SK-N-SH (cell line): ENCODE measurements at regions of chr1 and their contacts with region 1.

Region 1: DNA sequence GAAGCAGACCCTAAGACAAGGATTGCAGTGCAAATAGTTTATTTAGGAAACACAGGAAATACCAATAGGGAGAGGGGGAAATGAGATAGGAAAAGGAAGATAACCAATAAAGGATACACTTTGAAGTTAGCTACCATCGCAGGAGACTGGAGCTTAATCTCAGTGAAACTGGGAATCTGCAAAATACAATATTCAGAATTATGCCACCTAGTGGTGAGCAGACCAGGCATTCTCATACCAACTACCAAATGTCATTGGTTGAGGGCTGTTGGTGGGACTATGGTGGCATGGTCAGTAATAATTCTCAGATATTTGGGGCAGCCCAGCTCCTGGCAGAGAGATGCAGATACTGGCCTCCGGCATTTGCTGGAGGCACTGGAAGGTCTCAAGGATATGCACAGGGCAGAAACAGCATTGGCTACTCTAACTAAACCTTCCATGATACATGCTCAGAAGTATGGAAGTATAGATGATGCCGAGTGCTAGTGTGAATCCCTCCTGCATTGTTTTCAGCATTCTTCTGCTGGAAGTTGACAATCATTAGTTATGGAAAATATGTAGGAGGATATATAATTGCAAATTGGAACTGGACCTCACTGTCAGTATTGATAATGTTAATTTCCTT is 11.8 kb upstream of the ZFP69B start:
- DNase-seq: peak; percentile 75
- H3K4me3 ChIP-seq: no peak overlapping the region
- H3K27ac ChIP-seq: no peak overlapping the region
- H3K4me1 ChIP-seq: no peaks in the 10 kb centered on the region
- H3K27me3 ChIP-seq: no peaks in the 10 kb centered on the region
- CTCF ChIP-seq: peak; percentile 67
- EP300 ChIP-seq: no peak
- RAD21 ChIP-seq: peak; percentile 52

Region 2: DNA sequence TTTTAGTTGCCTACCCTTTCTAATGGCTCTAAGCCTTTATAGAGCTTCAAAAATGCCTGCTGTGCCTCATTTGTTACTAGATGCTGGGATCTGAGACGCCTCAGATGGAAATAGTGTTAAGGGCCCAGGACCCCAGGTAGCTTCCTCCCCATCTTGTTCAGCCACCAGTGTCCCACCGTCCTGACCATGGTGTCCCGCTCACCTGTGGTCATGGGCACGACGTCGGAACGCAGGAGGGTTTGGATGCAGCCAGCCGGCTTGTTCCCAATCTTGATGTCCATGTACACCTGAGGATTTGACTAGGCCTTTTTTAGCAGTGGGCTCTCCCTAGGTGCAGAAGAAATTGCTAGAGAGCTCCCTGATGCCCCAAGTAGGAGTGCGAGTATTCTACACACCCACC is 893.0 kb before region 1 on chr1:
- CTCF ChIA-PET with region 1: no interaction called
- POLR2A ChIA-PET with region 1: no interaction called
- DNase-seq: no peak
- H3K4me3 ChIP-seq: no peak overlapping the region
- H3K27ac ChIP-seq: no peak overlapping the region
- H3K4me1 ChIP-seq: no peaks in the 10 kb centered on the region
- H3K27me3 ChIP-seq: no peaks in the 10 kb centered on the region
- CTCF ChIP-seq: no peak
- EP300 ChIP-seq: no peak
- RAD21 ChIP-seq: no peak

Region 3: GRCh38 chr1:40267767-40268187 is 170.7 kb before region 1 on chr1:
- CTCF ChIA-PET with region 1: no interaction called
- POLR2A ChIA-PET with region 1: no interaction called
- DNase-seq: no peak
- H3K4me3 ChIP-seq: no peak overlapping the region
- H3K27ac ChIP-seq: peak overlapping the region in 1 of 2 experiments; percentile 99; a peak in 2 of 4 replicates
- H3K4me1 ChIP-seq: no peaks in the 10 kb centered on the region; a peak in 2 of 4 replicates
- H3K27me3 ChIP-seq: no peaks in the 10 kb centered on the region
- CTCF ChIP-seq: no peak
- EP300 ChIP-seq: no peak
- RAD21 ChIP-seq: no peak

Region 4: DNA sequence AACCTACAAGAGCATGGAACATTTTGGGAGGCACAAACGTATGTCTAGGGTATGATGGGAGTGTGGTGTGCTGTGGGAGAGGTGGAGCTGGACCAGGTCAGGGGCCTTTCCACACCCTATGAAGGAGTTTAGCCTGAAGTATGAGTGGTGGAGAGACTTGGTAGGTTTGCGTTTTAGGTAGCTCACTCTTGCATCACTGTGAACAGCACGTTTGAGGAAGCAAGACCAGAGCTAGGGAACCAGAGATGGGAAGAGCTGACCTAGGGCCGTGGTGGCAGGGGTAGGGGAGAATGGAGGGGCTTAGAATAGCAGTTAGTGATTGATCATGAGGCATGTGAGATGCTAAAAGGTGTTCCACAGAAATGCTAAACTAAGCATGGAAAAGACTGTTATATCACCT is 13.3 kb before region 1 on chr1:
- CTCF ChIA-PET with region 1: interaction called, 12 read pairs
- POLR2A ChIA-PET with region 1: no interaction called
- DNase-seq: no peak
- H3K4me3 ChIP-seq: no peak overlapping the region
- H3K27ac ChIP-seq: no peak overlapping the region
- H3K4me1 ChIP-seq: no peaks in the 10 kb centered on the region
- H3K27me3 ChIP-seq: no peaks in the 10 kb centered on the region
- CTCF ChIP-seq: no peak
- EP300 ChIP-seq: no peak
- RAD21 ChIP-seq: no peak

Region 5: GRCh38 chr1:40449684-40450494 is 11.4 kb after region 1 on chr1 and contains the start of gene ZFP69B:
- CTCF ChIA-PET with region 1: interaction called, 20 read pairs
- POLR2A ChIA-PET with region 1: interaction called, 4 read pairs
- DNase-seq: peak; percentile 98
- H3K4me3 ChIP-seq: peak within 1 kb of the TSS; percentile 73 to 83
- H3K27ac ChIP-seq: peak within 1 kb of the TSS; percentile 79 to 97
- H3K4me1 ChIP-seq: peaks cover 0 to 2% of the 10 kb centered on the region in 2 experiments; a peak in 2 of 4 replicates
- H3K27me3 ChIP-seq: no peaks in the 10 kb centered on the region
- CTCF ChIP-seq: peak; percentile 14; the same call in 1 of the 2 replicates
- EP300 ChIP-seq: no peak
- RAD21 ChIP-seq: no peak
- polyA plus RNA-seq, gene ZFP69B: 1.7 and 2.1 TPM in 2 replicates